CD14-positive monocyte (primary cell): ENCODE measurements at regions of chr1 and their contacts with region 1.

Region 1: DNA sequence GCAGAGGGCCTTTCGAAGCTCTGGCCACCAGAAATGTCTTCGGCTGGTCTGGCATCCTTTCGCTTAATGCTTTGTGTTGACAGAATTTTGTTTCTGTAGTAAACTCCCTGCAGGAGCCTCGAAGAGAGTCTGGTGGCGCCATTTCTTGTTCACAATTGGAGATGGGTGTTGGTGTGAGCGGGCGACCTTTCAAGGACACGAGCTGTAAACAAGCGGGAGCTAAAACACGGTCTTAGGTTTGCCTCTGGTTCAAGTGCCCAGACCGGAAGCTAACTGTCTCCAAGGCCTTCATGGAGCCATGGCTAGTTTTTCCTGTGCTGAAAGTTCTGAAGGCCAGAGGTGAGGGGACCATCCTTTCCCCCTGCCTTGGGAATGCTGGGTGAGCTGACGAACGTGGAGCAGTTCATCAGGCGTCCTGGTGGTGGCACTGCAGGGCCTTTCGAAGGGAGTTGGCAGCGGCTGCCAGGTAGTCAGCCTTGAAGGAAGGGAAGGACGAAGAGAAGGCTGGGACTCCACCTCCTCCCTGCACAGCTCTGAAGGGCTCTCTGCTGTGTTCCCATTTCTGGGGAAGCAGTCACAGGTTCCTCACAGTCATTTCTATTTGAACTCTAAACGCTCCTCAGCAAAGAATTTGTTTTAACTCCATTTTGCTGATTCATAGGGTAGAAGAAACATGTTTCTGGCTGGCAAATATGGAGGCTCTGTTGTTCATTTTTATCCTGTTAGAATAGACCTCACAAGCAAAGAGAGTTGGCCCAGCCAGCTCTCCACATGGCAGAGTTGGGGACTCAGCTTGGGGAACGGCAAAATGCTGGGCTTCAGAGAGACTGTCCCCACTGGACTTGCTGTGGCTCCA is 35.2 kb downstream of the URB2 start:
- DNase-seq: peak; percentile 30 to 57 (median 54)
- H3K4me3 ChIP-seq: no peak overlapping the region
- H3K4me3 Mint-ChIP-seq: no peak overlapping the region
- H3K27ac ChIP-seq: no peak overlapping the region
- H3K27ac Mint-ChIP-seq: peak overlapping the region in 3 of 7 donors; percentile 52 to 57 (median 56)
- H3K4me1 ChIP-seq: no peaks in the 10 kb centered on the region
- H3K4me1 Mint-ChIP-seq: peaks cover 2% of the 10 kb centered on the region
- H3K27me3 ChIP-seq: no peaks in the 10 kb centered on the region
- H3K27me3 Mint-ChIP-seq: no peaks in the 10 kb centered on the region
- CTCF ChIP-seq: peak; percentile 80

Region 2: GRCh38 chr1:230167419-230167852 is 506.2 kb after region 1 on chr1:
- intact Hi-C with region 1: loop called in 1 of 2 experiments (anchors 2 kb)
- DNase-seq: peak; percentile 51 to 70 (median 69)
- H3K4me3 ChIP-seq: no peak overlapping the region
- H3K4me3 Mint-ChIP-seq: no peak overlapping the region
- H3K27ac ChIP-seq: peak overlapping the region in 1 of 2 donors; percentile 42
- H3K27ac Mint-ChIP-seq: peak overlapping the region in 2 of 7 donors; percentile 48 to 75
- H3K4me1 ChIP-seq: peaks cover 8 to 15% of the 10 kb centered on the region in 2 donors
- H3K4me1 Mint-ChIP-seq: peaks cover 39% of the 10 kb centered on the region
- H3K27me3 ChIP-seq: no peaks in the 10 kb centered on the region
- H3K27me3 Mint-ChIP-seq: no peaks in the 10 kb centered on the region
- CTCF ChIP-seq: peak; percentile 96

Region 3: GRCh38 chr1:230310381-230311163 is 649.3 kb after region 1 on chr1:
- intact Hi-C with region 1: loop called (anchors 1 to 5 kb)
- DNase-seq: peak; percentile 59 to 67 (median 65)
- H3K4me3 ChIP-seq: no peak overlapping the region
- H3K4me3 Mint-ChIP-seq: no peak overlapping the region
- H3K27ac ChIP-seq: no peak overlapping the region
- H3K27ac Mint-ChIP-seq: no peak overlapping the region
- H3K4me1 ChIP-seq: no peaks in the 10 kb centered on the region
- H3K4me1 Mint-ChIP-seq: peaks cover 8% of the 10 kb centered on the region
- H3K27me3 ChIP-seq: no peaks in the 10 kb centered on the region
- H3K27me3 Mint-ChIP-seq: peaks cover 0 to 3% (median 2%) of the 10 kb centered on the region in 3 donors
- CTCF ChIP-seq: peak; percentile 88